ENCODE measurements at regions of chr19 and their contacts with region 1.

Region 1: DNA sequence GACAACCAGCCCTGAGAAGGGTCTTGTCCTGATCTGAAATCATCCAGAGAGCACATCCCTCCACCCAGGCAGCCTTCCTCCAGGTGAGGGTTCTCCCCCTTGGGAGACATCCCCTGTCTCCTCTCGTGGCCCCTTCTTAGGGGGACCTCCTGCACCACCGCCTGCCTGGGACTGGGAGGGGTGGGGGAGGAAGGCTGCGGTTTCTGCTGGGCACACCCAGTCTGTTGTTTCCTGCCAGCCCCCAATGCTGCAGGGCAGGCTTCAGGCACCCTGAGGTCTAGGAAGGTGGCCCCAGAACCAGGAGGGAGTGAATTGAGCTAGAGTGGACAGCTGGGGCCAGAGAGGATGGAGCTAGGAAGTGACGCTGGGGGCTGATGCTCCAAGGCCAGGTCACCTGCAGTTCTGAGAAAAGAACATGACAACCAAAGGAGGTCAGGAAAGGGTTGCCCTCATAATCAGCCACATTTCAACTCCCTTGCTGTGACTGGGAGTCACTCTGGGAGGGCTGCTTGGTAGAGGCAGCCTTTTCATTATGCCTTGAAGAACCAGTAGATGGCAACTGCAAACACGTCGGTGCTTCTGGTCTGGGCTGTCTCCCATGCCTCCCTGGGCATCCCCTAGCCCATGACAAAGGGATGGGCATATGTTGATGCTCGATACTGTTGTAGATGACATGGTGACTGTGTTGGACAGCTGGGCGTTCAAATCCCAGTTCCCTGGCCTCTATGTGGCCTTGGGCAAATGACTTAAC is 1.4 kb downstream of the ARHGEF18 start:
- DNase-seq: peak; percentile 53
- H3K4me3 ChIP-seq: no peak overlapping the region
- H3K27ac ChIP-seq: no peak overlapping the region
- H3K4me1 ChIP-seq: peaks cover 0 to 10% (median 7%) of the 10 kb centered on the region in 4 donors
- H3K27me3 ChIP-seq: no peaks in the 10 kb centered on the region
- CTCF ChIP-seq: no peak
- EP300 ChIP-seq: no peak
- POLR2A ChIP-seq: no peak

Region 2: DNA sequence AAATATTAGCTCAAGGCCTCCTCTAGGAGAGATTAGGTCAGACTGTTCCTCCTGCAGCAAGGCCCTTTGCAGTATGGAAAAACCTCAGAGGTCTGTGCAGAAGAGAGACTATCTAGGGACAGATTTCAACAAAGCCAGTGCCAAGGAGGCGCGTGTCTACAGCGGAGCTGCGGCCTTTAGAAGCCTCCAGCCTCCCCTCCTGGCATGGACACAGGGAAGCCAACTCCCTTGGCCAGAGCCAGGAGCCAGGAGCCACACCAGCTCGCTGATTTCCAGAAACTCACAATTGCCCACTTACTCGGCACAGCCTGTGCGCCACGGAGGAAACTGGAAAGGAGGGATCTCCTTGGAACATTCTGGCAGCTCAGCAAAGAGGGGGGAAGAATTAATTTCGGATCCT is 119.3 kb before region 1 on chr19:
- intact Hi-C with region 1: no loop called
- DNase-seq: peak; percentile 92
- H3K4me3 ChIP-seq: no peak overlapping the region
- H3K27ac ChIP-seq: peak overlapping the region in 3 of 4 donors; percentile 56 to 87 (median 60)
- H3K4me1 ChIP-seq: peaks cover 0 to 48% (median 32%) of the 10 kb centered on the region in 4 donors
- H3K27me3 ChIP-seq: no peaks in the 10 kb centered on the region
- CTCF ChIP-seq: no peak
- EP300 ChIP-seq: peak in 1 of 4 donors; percentile 37
- POLR2A ChIP-seq: no peak

Region 3: GRCh38 chr19:7376151-7376852 is 26.2 kb after region 1 on chr19:
- intact Hi-C with region 1: loop called (anchors 1 kb)
- DNase-seq: no peak
- H3K4me3 ChIP-seq: no peak overlapping the region
- H3K27ac ChIP-seq: no peak overlapping the region
- H3K4me1 ChIP-seq: peaks cover 0 to 47% (median 33%) of the 10 kb centered on the region in 4 donors
- H3K27me3 ChIP-seq: no peaks in the 10 kb centered on the region
- CTCF ChIP-seq: no peak
- EP300 ChIP-seq: no peak
- POLR2A ChIP-seq: no peak

Measured in sigmoid colon (tissue), 7 donors.